ENCODE measurements at regions of chr2 and their contacts with region 1.

Region 1: DNA sequence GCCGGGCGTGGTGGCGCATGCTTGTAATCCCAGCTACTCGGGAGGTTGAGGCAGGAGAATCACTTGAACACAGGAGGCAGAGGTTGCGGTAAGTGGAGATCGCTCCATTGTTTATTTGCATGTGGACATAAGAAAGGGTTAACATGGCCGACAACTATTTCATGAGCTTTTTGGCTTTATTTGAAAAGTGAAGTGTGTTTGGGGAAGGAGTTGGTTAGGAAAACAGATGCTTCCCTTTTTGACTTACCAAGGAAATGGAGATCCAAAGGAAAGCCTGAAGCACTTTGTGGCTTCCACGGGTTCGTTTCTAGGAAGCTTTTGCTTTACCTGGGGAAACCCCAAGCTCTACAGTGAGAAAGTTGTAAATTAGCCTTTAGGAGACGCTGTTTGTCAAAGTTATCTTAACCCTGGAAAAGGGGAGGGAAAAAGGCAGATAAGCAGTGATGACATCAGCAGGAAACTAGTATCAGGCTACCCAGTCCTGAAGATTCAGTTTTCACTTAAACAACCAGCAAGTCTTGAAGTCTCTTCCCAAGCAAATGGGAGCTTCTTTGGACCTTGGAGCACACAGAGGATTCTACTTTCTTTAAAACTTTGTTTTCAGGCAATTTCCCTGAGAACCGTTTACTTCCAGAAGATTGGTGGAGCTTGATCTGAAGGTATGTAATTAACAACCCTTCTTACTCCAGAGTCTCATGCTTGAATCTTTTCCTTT is at the start of gene CASP10:
- DNase-seq: peak; percentile 67
- CTCF ChIP-seq: peak; percentile 62

Region 2: DNA sequence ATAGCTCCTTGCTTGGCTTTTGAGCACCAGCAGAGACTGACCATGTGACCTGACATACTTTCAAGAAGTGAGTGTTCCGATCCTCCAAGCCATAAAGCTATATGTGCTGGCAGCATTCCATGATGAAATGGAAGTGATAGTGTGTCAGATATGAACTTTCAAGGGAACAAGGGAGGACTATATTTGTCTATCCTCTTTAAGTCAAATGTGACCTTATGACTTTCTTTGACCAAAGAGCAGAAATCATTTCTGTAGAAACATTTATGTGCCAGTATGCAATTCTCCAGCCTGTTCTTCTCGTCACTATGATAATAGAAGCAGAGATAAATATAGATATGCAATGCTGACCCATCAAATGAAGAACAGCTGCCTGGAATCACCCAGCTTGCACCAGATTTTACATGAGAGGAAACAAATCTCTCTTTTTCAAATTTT is 125.7 kb before region 1 on chr2:
- CTCF ChIA-PET with region 1: no interaction called
- POLR2A ChIA-PET with region 1: no interaction called
- DNase-seq: no peak
- CTCF ChIP-seq: no peak

Region 3: DNA sequence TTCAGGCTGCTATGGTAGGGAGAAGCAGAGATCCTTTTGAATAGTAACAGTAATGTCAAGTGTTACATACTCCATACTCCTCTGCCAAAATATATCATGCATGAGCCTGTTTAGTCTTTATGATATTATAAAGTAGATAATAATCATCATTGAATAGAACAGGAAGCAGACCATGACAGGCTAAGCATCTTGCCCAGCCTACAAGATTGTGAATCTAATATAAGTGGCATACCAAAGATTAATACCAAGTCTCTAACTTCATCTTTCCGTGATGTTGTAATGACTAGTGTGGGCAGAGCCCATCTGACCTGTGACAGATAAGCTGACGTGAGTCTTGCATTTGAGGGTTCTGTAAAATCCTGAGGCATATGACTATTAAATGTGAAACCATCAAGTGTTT is 97.9 kb before region 1 on chr2:
- CTCF ChIA-PET with region 1: no interaction called
- POLR2A ChIA-PET with region 1: no interaction called
- DNase-seq: no peak
- CTCF ChIP-seq: no peak

Region 4: GRCh38 chr2:201139836-201140604 is 42.8 kb before region 1 on chr2:
- CTCF ChIA-PET with region 1: interaction called, 11 read pairs
- POLR2A ChIA-PET with region 1: no interaction called
- DNase-seq: no peak
- CTCF ChIP-seq: no peak

Region 5: GRCh38 chr2:201194097-201194496 is 11.3 kb after region 1 on chr2:
- CTCF ChIA-PET with region 1: interaction called, 18 read pairs
- POLR2A ChIA-PET with region 1: no interaction called
- DNase-seq: peak; percentile 73
- CTCF ChIP-seq: no peak